Activated CD4-positive, alpha-beta T cell treated with anti-CD3 and anti-CD28 coated beads, Interleukin-2, amount 10 ng/mL, durations not matched to agents 24 days and 14 days (primary cell): ENCODE measurements at regions of chr14 and their contacts with region 1.

Region 1: GRCh38 chr14:20690848-20691523 is 2.4 kb downstream of the ANG start:
- DNase-seq: peak; percentile 84
- H3K4me3 Mint-ChIP-seq: no peak overlapping the region
- H3K27ac Mint-ChIP-seq: no peak overlapping the region
- H3K4me1 Mint-ChIP-seq: peaks cover 11% of the 10 kb centered on the region
- H3K27me3 Mint-ChIP-seq: peaks cover 2% of the 10 kb centered on the region

Region 2: DNA sequence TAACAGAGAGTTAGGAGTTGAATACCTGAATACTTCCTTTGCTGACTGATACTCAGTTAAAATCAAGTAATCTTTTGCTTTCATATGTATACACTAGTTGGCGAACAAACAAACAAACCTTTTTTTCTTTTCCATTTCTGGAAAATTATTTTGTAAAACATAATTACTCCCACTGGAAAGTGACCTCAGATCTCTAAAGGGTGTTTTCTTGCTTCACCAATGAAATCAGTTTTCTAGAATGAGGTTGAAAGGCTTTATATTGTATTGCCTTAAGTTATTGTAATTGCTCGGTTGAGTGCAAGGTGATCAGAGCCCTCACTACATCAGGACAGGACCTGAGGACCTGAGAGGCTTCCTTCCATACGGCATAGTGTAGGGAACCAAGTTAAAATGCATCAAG is 760.4 kb before region 1 on chr14 and contains the start of gene OR4K1:
- intact Hi-C with region 1: no loop called
- DNase-seq: no peak
- H3K4me3 Mint-ChIP-seq: no peak within 1 kb of the TSS
- H3K27ac Mint-ChIP-seq: no peak within 1 kb of the TSS
- H3K4me1 Mint-ChIP-seq: no peaks in the 10 kb centered on the region
- H3K27me3 Mint-ChIP-seq: no peaks in the 10 kb centered on the region
- total RNA-seq, gene OR4K1: not detected in 2 replicates

Region 3: DNA sequence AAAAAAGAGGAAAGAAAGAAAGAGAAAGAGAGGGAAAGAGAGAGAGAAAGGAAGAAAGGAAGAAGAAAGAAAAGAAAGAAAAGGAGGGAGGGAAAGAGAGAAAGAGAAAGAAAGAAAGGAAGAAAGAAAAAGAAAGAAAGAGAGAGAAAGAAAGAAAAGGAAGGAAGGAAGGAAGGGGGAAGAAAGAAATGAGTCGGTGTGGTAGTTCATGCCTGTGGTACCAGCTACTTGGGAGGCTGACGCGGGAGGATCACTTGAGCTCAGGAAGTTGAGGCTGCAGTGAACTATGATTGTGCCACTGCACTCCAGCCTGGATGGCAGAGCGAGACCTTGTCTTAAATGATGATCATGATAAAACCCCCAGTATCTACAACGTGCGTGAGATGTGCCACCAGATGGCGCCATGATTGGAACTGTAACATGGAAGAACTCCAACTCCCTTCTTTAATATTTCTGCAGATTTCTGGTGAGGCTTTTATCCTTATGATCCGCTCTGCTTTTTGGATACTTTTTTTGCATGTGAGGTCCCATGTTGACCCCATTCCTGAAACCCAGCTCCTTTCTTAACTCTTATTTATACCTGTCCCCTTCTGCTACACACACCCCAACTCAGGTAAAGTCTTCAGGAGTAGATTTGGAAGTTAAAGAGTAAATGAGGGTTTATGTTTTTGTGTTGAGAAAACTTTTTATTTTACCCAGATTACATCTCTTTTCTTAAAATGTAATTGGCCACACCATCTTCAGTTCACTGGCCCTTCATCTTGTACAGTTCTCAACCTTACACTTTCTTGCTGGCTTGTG is 160.0 kb before region 1 on chr14:
- intact Hi-C with region 1: loop called (anchors 1 kb)
- DNase-seq: peak; percentile 88
- H3K4me3 Mint-ChIP-seq: peak overlapping the region; percentile 4
- H3K27ac Mint-ChIP-seq: no peak overlapping the region
- H3K4me1 Mint-ChIP-seq: peaks cover 6% of the 10 kb centered on the region
- H3K27me3 Mint-ChIP-seq: peaks cover 49% of the 10 kb centered on the region

Region 4: GRCh38 chr14:20662968-20663732 is 27.8 kb before region 1 on chr14:
- intact Hi-C with region 1: loop called (anchors 1 kb)
- DNase-seq: peak; percentile 93
- H3K4me3 Mint-ChIP-seq: peak overlapping the region; percentile 86
- H3K27ac Mint-ChIP-seq: peak overlapping the region; percentile 21
- H3K4me1 Mint-ChIP-seq: peaks cover 35% of the 10 kb centered on the region
- H3K27me3 Mint-ChIP-seq: peaks cover 17% of the 10 kb centered on the region